ENCODE measurements at regions of chr2 and their contacts with region 1.

Region 1: DNA sequence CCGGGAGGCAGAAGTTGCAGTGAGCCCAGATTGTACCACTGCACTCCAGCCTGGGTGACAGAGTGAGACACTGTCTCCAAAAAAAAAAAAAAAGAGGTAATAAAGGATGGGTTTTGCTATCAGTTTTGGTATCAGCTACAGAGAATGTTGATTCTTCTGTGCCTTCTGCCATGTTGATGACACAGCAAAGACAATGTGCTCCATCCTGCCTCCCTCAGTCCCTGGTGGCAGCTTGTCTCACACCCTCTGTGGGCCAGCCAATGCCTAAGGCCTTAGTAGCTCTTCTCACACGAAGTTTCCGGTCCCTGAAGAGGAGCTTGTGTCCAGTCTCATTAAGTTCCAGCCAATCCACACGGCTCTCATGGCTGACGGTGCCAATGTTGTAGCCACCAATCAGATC is 17.6 kb downstream of the IFT172 start:
- DNase-seq: no peak
- ATAC-seq: no peak
- H3K4me3 ChIP-seq: no peak overlapping the region
- H3K4me3 Mint-ChIP-seq: no peak overlapping the region
- H3K27ac ChIP-seq: no peak overlapping the region
- H3K27ac Mint-ChIP-seq: no peak overlapping the region
- H3K4me1 ChIP-seq: no peaks in the 10 kb centered on the region
- H3K4me1 Mint-ChIP-seq: no peaks in the 10 kb centered on the region
- H3K27me3 ChIP-seq: no peaks in the 10 kb centered on the region
- H3K27me3 Mint-ChIP-seq: no peaks in the 10 kb centered on the region

Region 2: DNA sequence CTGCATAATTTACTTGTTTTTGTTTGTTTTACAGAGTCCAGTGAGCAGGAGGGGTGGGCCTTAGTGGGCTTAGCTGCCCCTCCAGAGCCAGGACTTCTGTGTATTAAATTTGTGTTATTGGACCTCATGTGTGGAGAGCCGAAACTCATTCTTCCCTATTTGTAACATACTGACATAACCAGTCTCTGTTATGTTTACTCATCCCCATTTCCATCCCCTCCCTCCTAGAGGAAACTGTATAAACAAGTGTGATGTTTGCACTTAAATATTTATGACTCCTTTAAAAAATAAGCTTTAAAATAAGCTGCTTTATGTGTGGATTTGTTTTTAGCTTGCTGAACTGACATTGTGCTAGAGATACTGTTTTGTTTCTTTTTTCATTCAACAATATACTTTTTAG is 124.7 kb after region 1 on chr2:
- CTCF ChIA-PET with region 1: no interaction called
- POLR2A ChIA-PET with region 1: interaction called in 1 of 2 experiments, 14 read pairs
- DNase-seq: no peak
- ATAC-seq: no peak
- H3K4me3 ChIP-seq: no peak overlapping the region
- H3K4me3 Mint-ChIP-seq: no peak overlapping the region
- H3K27ac ChIP-seq: no peak overlapping the region
- H3K27ac Mint-ChIP-seq: peak overlapping the region in 1 of 2 donors; percentile 58
- H3K4me1 ChIP-seq: peaks cover 0 to 7% of the 10 kb centered on the region in 2 experiments
- H3K4me1 Mint-ChIP-seq: peaks cover 37 to 49% (median 44%) of the 10 kb centered on the region in 3 donors
- H3K27me3 ChIP-seq: no peaks in the 10 kb centered on the region
- H3K27me3 Mint-ChIP-seq: no peaks in the 10 kb centered on the region

Region 3: GRCh38 chr2:27807476-27807875 is 335.5 kb after region 1 on chr2:
- CTCF ChIA-PET with region 1: no interaction called
- POLR2A ChIA-PET with region 1: no interaction called
- DNase-seq: peak in 4 of 35 experiments; percentile 7 to 27 (median 8)
- ATAC-seq: no peak
- H3K4me3 ChIP-seq: no peak overlapping the region
- H3K4me3 Mint-ChIP-seq: no peak overlapping the region
- H3K27ac ChIP-seq: no peak overlapping the region
- H3K27ac Mint-ChIP-seq: no peak overlapping the region
- H3K4me1 ChIP-seq: no peaks in the 10 kb centered on the region
- H3K4me1 Mint-ChIP-seq: no peaks in the 10 kb centered on the region
- H3K27me3 ChIP-seq: no peaks in the 10 kb centered on the region
- H3K27me3 Mint-ChIP-seq: no peaks in the 10 kb centered on the region